A549 (cell line): ENCODE measurements at regions of chr15 and their contacts with region 1.

Region 1: DNA sequence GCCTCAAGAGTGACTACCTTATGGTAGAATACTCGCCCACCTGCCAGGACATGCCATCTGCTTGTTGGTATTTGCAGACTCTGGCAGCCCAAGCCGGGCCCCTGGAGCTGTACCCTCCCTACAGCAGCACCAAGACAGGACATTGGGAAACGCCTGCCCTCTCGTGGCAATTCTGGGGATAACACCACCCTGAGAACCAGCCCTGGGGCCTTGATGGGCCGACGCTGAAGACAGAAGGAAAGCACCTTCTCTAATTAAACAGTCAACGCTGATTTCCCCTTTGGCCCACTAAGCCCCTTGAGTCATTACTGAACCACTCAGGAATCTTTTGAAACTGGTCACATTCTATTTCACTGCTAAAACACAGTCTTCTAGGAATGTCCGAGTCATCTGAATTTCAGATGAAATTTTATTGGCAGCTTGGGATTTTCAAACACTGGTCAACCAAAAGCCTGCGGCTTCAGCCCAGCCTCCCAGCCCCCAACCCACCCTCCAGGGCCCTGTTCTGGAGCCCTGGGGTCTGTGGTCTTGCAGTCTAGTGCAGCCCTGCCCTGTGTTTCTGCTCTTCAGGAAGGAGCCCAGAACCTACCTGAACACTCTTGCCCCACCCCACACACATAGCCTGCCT is 91.3 kb downstream of the TMEM266 start:
- DNase-seq: peak; percentile 72 to 88
- ATAC-seq: peak; percentile 73 to 92; a peak in 4 of 6 replicates
- H3K4me3 ChIP-seq: no peak overlapping the region
- H3K27ac ChIP-seq: peak overlapping the region; percentile 6 to 10; a peak in 1 of 6 replicates
- H3K4me1 ChIP-seq: 0 out of 3 replicates have a peak, but pooled peaks cover 3% of the 10 kb centered on the region
- CTCF ChIP-seq: peak; percentile 82
- EP300 ChIP-seq: no peak
- POLR2A ChIP-seq: no peak
- RAD21 ChIP-seq: peak; percentile 72 to 78

Region 2: GRCh38 chr15:75809986-75810750 is 340.9 kb before region 1 on chr15:
- CTCF ChIA-PET with region 1: interaction called, 26 read pairs
- POLR2A ChIA-PET with region 1: no interaction called
- DNase-seq: peak; percentile 55 to 65
- ATAC-seq: peak; percentile 79 to 92
- H3K4me3 ChIP-seq: no peak overlapping the region
- H3K27ac ChIP-seq: no peak overlapping the region
- H3K4me1 ChIP-seq: no peaks in the 10 kb centered on the region
- CTCF ChIP-seq: peak; percentile 65
- EP300 ChIP-seq: no peak
- POLR2A ChIP-seq: no peak
- RAD21 ChIP-seq: peak; percentile 79 to 85

Region 3: DNA sequence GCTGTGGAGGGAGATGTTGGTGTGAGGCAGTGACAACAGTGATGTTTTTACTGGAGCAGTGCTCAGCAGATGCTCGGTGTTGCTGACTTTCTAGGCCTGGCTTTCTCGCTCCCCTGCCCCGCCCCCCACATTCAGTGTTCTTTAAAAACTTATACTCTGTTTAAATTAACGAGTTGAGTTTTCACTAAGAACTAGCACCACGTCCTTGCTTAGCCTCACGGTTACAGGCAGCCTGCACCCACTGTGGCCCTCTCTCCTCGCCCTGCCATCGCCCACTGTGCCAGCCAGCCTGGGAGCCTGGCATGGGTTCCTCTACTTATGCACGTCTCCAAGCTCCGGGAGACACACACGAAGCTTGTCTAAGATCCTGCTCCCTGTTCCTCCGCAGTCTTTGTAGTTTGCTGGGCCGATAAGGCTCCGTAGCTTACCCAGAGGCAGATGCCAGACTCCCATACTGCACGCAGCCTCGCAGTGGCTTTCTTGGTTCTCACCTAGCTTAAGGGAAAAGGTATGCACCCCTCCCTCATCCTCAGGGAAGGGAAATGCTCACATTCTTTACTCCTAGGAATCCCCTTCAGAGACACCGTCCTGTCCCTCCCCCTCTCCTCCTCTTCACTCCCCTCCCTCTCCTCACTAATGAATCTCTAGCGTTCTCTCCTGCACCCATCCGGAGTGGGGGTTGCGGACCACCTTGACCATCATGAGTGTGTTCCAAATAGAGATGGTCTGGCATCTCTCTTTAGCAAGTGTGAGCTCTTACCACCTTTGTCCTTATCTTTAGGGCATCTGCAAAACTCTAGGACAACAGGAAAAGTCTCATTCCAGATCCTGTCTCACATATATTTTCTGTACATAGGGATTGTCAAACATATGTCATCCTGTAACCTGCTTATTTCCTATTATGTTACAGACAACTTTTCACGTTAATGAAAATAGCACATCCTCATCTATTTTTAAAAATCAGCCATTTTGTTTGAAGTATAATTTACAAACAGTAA is 34.9 kb before region 1 on chr15:
- CTCF ChIA-PET with region 1: interaction called, 13 read pairs
- POLR2A ChIA-PET with region 1: no interaction called
- DNase-seq: no peak
- ATAC-seq: no peak
- H3K4me3 ChIP-seq: no peak overlapping the region
- H3K27ac ChIP-seq: no peak overlapping the region
- H3K4me1 ChIP-seq: peaks cover 2% of the 10 kb centered on the region; the same call in 1 of the 3 replicates
- CTCF ChIP-seq: no peak
- EP300 ChIP-seq: no peak
- POLR2A ChIP-seq: no peak
- RAD21 ChIP-seq: no peak

Region 4: GRCh38 chr15:76139368-76140073 is 11.6 kb before region 1 on chr15:
- CTCF ChIA-PET with region 1: interaction called, 292 read pairs
- POLR2A ChIA-PET with region 1: no interaction called
- DNase-seq: peak; percentile 79 to 94
- ATAC-seq: peak; percentile 81 to 94
- H3K4me3 ChIP-seq: no peak overlapping the region
- H3K27ac ChIP-seq: no peak overlapping the region
- H3K4me1 ChIP-seq: no peaks in the 10 kb centered on the region
- CTCF ChIP-seq: peak; percentile 93
- EP300 ChIP-seq: no peak
- POLR2A ChIP-seq: no peak
- RAD21 ChIP-seq: peak; percentile 88 to 90

Region 5: DNA sequence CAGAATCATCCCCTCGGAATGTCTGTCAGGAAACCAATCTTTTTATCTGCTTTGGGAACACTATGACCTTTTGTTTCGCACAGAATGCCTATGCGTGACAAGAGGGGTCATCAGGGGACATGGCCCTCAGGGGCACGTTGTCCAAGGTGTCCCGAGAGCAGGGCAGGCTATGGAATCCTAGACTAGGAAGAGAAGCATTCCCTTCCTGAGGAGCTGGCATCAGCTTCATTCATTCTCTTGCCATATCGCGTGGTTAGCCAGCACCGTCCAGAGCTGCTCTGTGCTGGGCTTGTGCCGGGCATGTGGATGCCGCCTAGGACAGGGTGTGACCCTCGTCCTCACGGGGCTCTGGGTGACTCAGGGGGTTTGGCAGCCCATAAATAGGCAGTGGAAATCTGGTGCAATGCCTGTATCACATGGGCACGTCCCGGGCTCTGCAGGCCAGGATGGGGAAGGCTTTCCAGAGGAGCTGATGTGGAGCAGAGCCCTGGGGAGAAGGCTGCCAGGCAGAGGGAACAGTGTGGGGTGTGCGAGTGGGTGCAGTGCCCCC is 26.5 kb after region 1 on chr15:
- CTCF ChIA-PET with region 1: interaction called, 11 read pairs
- POLR2A ChIA-PET with region 1: no interaction called
- DNase-seq: peak; percentile 52 to 56
- ATAC-seq: peak; percentile 64 to 79
- H3K4me3 ChIP-seq: no peak overlapping the region
- H3K27ac ChIP-seq: peak overlapping the region; percentile 47 to 67; a peak in 5 of 6 replicates
- H3K4me1 ChIP-seq: peaks cover 11% of the 10 kb centered on the region; the same call in 2 of the 3 replicates
- CTCF ChIP-seq: no peak
- EP300 ChIP-seq: no peak
- POLR2A ChIP-seq: no peak
- RAD21 ChIP-seq: no peak

Region 6: GRCh38 chr15:76221085-76221767 is 70.1 kb after region 1 on chr15:
- CTCF ChIA-PET with region 1: no interaction called
- POLR2A ChIA-PET with region 1: no interaction called
- DNase-seq: no peak
- ATAC-seq: no peak
- H3K4me3 ChIP-seq: no peak overlapping the region
- H3K27ac ChIP-seq: no peak overlapping the region
- H3K4me1 ChIP-seq: peaks cover 19% of the 10 kb centered on the region
- CTCF ChIP-seq: no peak
- EP300 ChIP-seq: no peak
- POLR2A ChIP-seq: no peak
- RAD21 ChIP-seq: no peak

Region 7: GRCh38 chr15:76253691-76254473 is 102.8 kb after region 1 on chr15:
- CTCF ChIA-PET with region 1: no interaction called
- POLR2A ChIA-PET with region 1: no interaction called
- DNase-seq: no peak
- ATAC-seq: no peak
- H3K4me3 ChIP-seq: no peak overlapping the region
- H3K27ac ChIP-seq: no peak overlapping the region
- H3K4me1 ChIP-seq: no peaks in the 10 kb centered on the region
- CTCF ChIP-seq: no peak
- EP300 ChIP-seq: no peak
- POLR2A ChIP-seq: no peak
- RAD21 ChIP-seq: no peak

Region 8: GRCh38 chr15:76866716-76867321 is 715.7 kb after region 1 on chr15:
- CTCF ChIA-PET with region 1: interaction called, 27 read pairs
- POLR2A ChIA-PET with region 1: no interaction called
- DNase-seq: peak; percentile 18 to 52
- ATAC-seq: peak in 1 of 2 experiments; percentile 75; a peak in 4 of 6 replicates
- H3K4me3 ChIP-seq: no peak overlapping the region
- H3K27ac ChIP-seq: no peak overlapping the region
- H3K4me1 ChIP-seq: no peaks in the 10 kb centered on the region
- CTCF ChIP-seq: peak; percentile 87
- EP300 ChIP-seq: no peak
- POLR2A ChIP-seq: no peak
- RAD21 ChIP-seq: peak; percentile 83 to 91